SK-N-SH (cell line): ENCODE measurements at regions of chr12 and their contacts with region 1.

Region 1: DNA sequence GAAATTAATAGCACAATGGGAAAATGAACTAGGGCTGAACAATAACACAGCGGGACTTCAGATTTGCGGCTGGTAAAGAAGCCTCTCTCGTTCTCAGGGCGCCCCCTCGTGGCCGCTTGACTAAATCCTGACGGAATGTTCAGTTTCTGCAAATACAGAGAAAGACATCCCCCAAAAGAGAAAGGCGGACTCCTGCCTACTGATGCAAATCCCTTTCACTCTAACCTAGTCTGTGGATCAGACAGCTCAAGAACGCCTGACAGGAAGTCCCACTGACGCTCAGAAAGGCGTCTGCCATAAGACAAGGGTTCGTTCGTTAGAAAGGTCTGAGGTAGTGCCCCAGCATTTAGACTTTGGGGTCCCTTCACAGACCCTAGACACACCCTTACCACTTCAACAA is 2.5 kb downstream of the NUAK1 start:
- DNase-seq: peak; percentile 70
- H3K4me3 ChIP-seq: peak overlapping the region; percentile 80 to 85
- H3K27ac ChIP-seq: peak overlapping the region; percentile 69 to 71; a peak in 3 of 4 replicates
- H3K4me1 ChIP-seq: peaks cover 25 to 28% of the 10 kb centered on the region in 2 experiments
- H3K27me3 ChIP-seq: no peaks in the 10 kb centered on the region
- CTCF ChIP-seq: peak; percentile 88
- EP300 ChIP-seq: no peak; a peak in 1 of 4 replicates
- RAD21 ChIP-seq: peak; percentile 92

Region 2: DNA sequence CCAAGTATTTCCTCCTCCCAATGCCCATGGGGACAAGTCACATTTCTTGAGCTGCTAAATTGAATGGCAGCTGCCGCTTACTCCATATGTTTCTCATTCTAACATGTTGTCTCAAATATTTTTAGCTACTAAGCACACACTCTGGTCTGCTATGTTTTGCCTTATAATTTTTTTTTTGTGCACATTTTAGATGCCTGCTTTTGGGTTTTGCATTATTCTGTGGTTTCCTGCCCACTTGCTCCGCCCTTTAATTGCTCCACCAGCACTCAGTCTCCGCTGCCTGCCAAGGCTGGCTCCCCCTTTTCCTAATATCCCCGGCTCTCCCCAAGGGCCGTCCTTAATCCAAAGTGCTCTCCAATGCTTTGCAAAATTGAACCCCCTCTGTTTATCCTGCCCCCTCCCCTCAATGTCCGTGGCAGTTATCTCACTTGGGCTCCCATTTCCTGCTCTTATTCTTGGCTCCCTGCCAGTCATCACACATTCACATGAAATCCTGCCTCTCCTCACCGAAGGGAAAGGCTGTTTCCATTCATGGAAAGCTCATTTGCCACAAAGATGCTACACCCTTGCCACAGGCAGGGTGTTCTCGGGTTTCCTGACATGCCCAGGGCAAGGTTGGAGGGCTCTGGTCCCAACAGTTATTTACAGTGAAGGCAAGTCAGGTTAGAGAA is 726.3 kb before region 1 on chr12:
- CTCF ChIA-PET with region 1: interaction called, 17 read pairs
- POLR2A ChIA-PET with region 1: no interaction called
- DNase-seq: peak; percentile 37
- H3K4me3 ChIP-seq: no peak overlapping the region
- H3K27ac ChIP-seq: no peak overlapping the region
- H3K4me1 ChIP-seq: peaks cover 7 to 16% of the 10 kb centered on the region in 2 experiments; a peak in 3 of 4 replicates
- H3K27me3 ChIP-seq: no peaks in the 10 kb centered on the region
- CTCF ChIP-seq: no peak
- EP300 ChIP-seq: no peak
- RAD21 ChIP-seq: no peak

Region 3: DNA sequence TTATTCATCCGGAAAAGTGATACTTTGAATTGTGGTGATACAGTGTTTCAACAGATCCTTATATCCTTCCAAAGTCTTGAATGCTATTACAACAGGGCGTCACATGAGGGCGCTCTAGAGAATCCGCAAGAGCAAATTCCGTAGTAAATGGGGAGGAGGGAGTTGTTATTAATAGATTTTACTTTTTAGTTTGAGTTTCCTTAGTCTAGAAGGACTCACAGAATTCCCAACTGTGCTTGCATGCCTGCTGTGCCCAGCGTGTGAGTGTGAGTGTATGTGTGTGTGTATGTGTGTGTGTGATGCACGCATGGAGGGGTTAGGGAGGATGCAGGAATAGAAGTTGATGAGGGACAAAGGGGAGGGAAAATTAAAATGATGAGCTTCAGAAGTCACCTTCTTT is 430.5 kb before region 1 on chr12:
- CTCF ChIA-PET with region 1: interaction called, 76 read pairs
- POLR2A ChIA-PET with region 1: no interaction called
- DNase-seq: peak; percentile 27
- H3K4me3 ChIP-seq: no peak overlapping the region; a peak in 1 of 4 replicates
- H3K27ac ChIP-seq: peak overlapping the region in 1 of 2 experiments; percentile 36; a peak in 2 of 4 replicates
- H3K4me1 ChIP-seq: peaks cover 2 to 12% of the 10 kb centered on the region in 2 experiments; a peak in 3 of 4 replicates
- H3K27me3 ChIP-seq: no peaks in the 10 kb centered on the region
- CTCF ChIP-seq: peak; percentile 96
- EP300 ChIP-seq: no peak
- RAD21 ChIP-seq: peak; percentile 68

Region 4: DNA sequence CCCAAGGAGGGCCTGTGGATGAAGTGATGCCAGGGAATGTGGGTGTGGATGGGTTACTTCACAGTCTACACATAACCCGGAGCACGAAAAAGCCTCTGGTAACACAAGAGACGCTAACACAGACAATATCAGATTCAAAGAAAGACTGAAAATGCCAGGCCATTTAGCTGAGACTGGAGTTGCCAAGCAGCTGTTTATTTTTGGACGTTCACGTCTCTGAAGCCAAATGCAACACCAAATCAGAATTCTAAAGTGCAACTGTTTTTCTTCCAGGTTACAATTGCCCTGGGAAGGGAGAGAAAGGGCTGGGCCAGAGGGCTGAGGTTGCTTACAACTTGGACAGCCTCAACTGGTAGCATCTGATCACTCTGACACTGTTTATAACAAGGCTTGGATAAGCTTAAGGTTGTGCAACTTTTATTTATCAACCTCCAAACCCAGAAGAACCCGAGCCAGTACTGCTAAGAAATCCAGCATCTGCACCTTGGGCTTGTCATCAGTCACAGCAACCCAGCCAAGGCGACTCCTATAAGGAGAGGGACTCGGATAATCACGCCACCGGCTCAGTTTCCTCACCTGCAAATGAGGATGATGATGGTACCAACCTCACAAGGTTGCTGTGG is 22.3 kb before region 1 on chr12:
- CTCF ChIA-PET with region 1: interaction called, 33 read pairs
- POLR2A ChIA-PET with region 1: no interaction called
- DNase-seq: no peak
- H3K4me3 ChIP-seq: no peak overlapping the region
- H3K27ac ChIP-seq: peak overlapping the region in 1 of 2 experiments; percentile 45; a peak in 1 of 4 replicates
- H3K4me1 ChIP-seq: peaks cover 4 to 34% of the 10 kb centered on the region in 2 experiments; a peak in 3 of 4 replicates
- H3K27me3 ChIP-seq: no peaks in the 10 kb centered on the region
- CTCF ChIP-seq: no peak
- EP300 ChIP-seq: no peak
- RAD21 ChIP-seq: no peak

Region 5: GRCh38 chr12:106149096-106149784 is 13.0 kb after region 1 on chr12:
- CTCF ChIA-PET with region 1: interaction called, 29 read pairs
- POLR2A ChIA-PET with region 1: no interaction called
- DNase-seq: no peak
- H3K4me3 ChIP-seq: no peak overlapping the region
- H3K27ac ChIP-seq: no peak overlapping the region
- H3K4me1 ChIP-seq: peaks cover 0 to 13% of the 10 kb centered on the region in 2 experiments; a peak in 2 of 4 replicates
- H3K27me3 ChIP-seq: no peaks in the 10 kb centered on the region
- CTCF ChIP-seq: peak; percentile 64
- EP300 ChIP-seq: no peak
- RAD21 ChIP-seq: peak; percentile 39

Region 6: DNA sequence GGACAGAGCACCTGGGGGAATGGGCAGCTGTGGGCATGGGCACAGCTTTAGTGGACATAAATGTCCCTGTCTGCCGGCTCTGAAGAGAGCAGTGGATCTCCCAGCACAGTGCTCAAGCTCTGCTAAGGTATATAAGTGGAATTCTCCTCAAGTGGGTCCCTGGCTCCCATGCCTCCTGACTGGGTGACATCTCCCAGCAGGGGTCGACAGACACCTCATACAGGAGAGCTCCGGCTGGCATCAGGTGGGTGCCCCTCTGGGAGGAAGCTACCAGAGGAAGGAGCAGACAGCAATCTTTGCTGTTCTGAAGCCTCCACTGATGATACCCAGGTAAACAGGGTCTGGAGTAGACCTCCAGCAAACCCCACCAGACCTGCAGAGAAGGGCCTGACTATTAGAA is 27.4 kb after region 1 on chr12:
- CTCF ChIA-PET with region 1: no interaction called
- POLR2A ChIA-PET with region 1: no interaction called
- DNase-seq: no peak
- H3K4me3 ChIP-seq: no peak overlapping the region
- H3K27ac ChIP-seq: no peak overlapping the region
- H3K4me1 ChIP-seq: no peaks in the 10 kb centered on the region
- H3K27me3 ChIP-seq: no peaks in the 10 kb centered on the region
- CTCF ChIP-seq: no peak
- EP300 ChIP-seq: no peak
- RAD21 ChIP-seq: no peak

Region 7: DNA sequence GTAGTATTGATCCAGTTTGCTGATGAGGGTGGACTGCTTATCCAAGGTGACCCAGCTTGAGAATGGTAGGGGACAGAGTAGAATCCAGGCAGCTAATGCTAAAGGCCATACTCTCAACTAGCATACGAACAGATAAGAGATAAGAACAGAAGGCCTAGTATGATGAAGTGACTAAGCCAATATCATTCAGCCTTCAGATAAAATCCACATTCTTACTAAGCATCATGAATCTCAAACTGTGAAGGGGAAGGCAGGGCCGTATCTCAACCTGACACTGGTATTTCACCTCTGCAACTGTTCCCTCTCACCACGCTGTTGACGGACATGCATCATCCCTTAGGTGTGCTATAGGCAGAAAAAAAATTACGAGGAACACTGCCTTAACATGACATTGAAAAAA is 119.7 kb after region 1 on chr12:
- CTCF ChIA-PET with region 1: no interaction called
- POLR2A ChIA-PET with region 1: no interaction called
- DNase-seq: no peak
- H3K4me3 ChIP-seq: no peak overlapping the region
- H3K27ac ChIP-seq: no peak overlapping the region
- H3K4me1 ChIP-seq: no peaks in the 10 kb centered on the region
- H3K27me3 ChIP-seq: no peaks in the 10 kb centered on the region
- CTCF ChIP-seq: no peak
- EP300 ChIP-seq: no peak
- RAD21 ChIP-seq: no peak